Testis (tissue), 5 donors: ENCODE measurements at regions of chr11 and their contacts with region 1.

Region 1: DNA sequence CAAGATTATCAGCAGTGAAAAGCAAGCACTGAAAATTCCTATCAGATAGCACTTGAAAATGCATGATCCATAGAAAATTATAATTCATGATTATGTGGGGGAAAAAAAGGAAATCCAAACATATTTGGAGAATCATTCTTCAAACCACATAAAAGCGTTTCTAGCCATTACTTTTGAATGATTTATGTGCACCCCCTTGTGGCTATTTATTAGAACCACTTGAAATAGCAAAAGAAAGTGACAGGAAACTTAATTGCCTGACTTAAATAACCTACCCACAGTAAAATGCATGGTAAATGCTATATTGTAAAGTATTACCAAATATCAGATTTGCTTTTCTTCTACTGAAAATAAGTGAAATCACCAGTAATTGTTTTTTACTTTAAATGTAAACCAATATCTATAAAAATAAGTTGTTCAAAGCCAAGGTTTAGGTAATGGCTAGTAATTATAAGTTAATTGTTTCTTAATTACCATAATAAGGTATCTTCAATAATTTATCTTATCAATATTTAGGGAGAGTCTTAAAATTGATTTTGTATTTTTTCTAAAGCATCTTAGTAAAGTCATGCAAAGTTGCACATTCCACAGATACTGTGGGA is 168.5 kb downstream of the ARHGAP42 start:
- DNase-seq: no peak
- H3K4me3 ChIP-seq: no peak overlapping the region
- H3K27ac ChIP-seq: no peak overlapping the region
- H3K4me1 ChIP-seq: no peaks in the 10 kb centered on the region
- H3K27me3 ChIP-seq: no peaks in the 10 kb centered on the region
- CTCF ChIP-seq: peak; percentile 33 to 54 (median 49)
- POLR2A ChIP-seq: no peak

Region 2: GRCh38 chr11:100240025-100240539 is 615.5 kb before region 1 on chr11:
- intact Hi-C with region 1: no loop called
- DNase-seq: no peak
- H3K4me3 ChIP-seq: no peak overlapping the region
- H3K27ac ChIP-seq: no peak overlapping the region
- H3K4me1 ChIP-seq: no peaks in the 10 kb centered on the region
- H3K27me3 ChIP-seq: no peaks in the 10 kb centered on the region
- CTCF ChIP-seq: no peak
- POLR2A ChIP-seq: no peak

Region 3: DNA sequence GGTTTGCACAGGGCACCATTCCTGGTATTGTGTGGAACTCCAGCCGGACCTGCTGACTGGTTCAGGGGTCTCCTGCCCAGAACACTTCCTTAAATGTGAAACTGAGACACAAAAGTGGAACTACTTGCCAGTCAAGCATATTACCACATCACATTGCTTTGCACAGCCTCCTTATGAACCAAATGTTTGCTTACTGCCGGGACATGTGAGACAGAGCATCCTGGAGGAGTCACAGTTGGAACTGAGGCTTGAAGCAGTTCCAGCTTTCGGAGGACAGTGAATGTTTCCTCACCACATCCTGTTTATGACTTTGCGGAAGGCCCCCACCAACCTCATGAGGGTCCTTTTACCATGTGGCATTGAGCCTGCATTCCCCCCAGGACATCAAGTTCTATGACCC is 274.2 kb before region 1 on chr11:
- intact Hi-C with region 1: loop called (anchors 10 kb)
- DNase-seq: no peak
- H3K4me3 ChIP-seq: no peak overlapping the region
- H3K27ac ChIP-seq: no peak overlapping the region
- H3K4me1 ChIP-seq: no peaks in the 10 kb centered on the region
- H3K27me3 ChIP-seq: no peaks in the 10 kb centered on the region
- CTCF ChIP-seq: no peak
- POLR2A ChIP-seq: no peak

Region 4: DNA sequence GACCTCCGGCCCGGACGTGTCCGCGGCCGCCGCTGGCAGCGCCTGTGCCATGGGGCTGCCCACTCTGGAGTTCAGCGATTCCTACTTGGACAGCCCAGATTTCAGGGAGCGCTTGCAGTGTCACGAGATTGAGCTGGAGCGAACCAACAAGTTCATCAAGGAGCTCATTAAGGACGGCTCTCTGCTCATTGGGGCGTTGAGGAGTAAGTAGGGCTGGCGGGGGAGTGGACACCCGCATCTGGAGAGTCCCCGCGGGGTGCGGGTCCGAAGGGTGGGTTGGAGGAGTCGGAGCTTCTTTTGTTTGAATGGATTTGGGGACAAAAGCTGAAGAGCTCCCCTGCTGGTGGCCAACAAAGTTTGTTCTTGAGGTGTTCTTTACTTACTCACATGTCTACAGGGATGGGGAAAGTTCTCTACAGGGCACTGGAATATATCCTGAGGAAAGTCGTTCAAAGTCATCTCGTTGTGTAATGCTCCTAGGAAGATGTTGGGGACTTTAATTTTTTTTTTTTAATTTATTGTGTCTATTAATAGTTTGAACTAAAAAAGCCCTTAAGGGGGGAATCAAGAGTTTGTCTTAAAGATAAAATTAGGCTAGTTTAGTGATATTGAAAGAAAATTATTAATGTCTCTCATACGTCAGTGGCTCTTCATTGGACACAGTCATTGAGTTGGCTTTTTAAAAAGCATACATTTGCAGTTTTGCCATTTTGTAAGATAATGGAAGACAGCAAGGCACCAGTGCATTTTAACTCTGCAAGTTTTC is 167.8 kb before region 1 on chr11:
- intact Hi-C with region 1: loop called (anchors 10 kb)
- DNase-seq: peak; percentile 75
- H3K4me3 ChIP-seq: peak overlapping the region; percentile 76 to 77
- H3K27ac ChIP-seq: peak overlapping the region; percentile 47 to 82
- H3K4me1 ChIP-seq: no peaks in the 10 kb centered on the region
- H3K27me3 ChIP-seq: no peaks in the 10 kb centered on the region
- CTCF ChIP-seq: peak; percentile 23 to 70 (median 62)
- POLR2A ChIP-seq: no peak